ENCODE measurements at regions of chr6 and their contacts with region 1.

Region 1: GRCh38 chr6:46062306-46062706 is 46.6 kb upstream of the CLIC5 start:
- DNase-seq: no peak
- ATAC-seq: no peak
- H3K4me3 ChIP-seq: no peak overlapping the region
- H3K27ac ChIP-seq: no peak overlapping the region
- H3K4me1 ChIP-seq: peaks cover 5 to 10% of the 10 kb centered on the region in 2 donors
- H3K27me3 ChIP-seq: no peaks in the 10 kb centered on the region
- CTCF ChIP-seq: no peak
- POLR2A ChIP-seq: no peak

Region 2: GRCh38 chr6:45900808-45901752 is 161.2 kb before region 1 on chr6:
- in situ Hi-C with region 1: no loop called
- intact Hi-C with region 1: no loop called
- DNase-seq: peak in 1 of 2 donors; percentile 25
- ATAC-seq: peak; percentile 60 to 77
- H3K4me3 ChIP-seq: no peak overlapping the region
- H3K27ac ChIP-seq: peak overlapping the region; percentile 22 to 73 (median 54)
- H3K4me1 ChIP-seq: peaks cover 39 to 40% of the 10 kb centered on the region in 2 donors
- H3K27me3 ChIP-seq: no peaks in the 10 kb centered on the region
- CTCF ChIP-seq: no peak
- POLR2A ChIP-seq: no peak

Region 3: DNA sequence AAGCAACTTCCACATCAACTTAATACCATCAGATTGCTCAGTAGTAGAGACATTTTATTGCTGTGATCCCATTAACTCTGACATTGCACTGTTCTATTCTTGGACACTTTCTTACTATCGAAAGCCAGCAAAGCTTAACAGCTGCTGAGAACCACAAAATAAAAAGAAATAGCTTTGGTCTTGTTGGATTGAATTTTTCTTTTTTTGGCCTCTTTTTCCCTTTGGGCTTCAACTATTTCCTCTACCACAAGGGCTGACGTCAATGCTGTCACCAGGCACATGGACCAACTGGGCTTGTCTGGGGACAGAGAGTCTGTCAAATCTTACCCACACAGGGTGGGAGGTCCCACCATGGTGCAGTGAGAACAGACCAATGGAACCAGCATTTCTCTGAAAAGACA is 171.8 kb after region 1 on chr6:
- in situ Hi-C with region 1: no loop called
- intact Hi-C with region 1: no loop called
- DNase-seq: peak in 1 of 2 donors; percentile 41
- ATAC-seq: peak; percentile 51 to 53
- H3K4me3 ChIP-seq: no peak overlapping the region
- H3K27ac ChIP-seq: peak overlapping the region; percentile 35 to 69 (median 58)
- H3K4me1 ChIP-seq: peaks cover 23 to 53% of the 10 kb centered on the region in 2 donors
- H3K27me3 ChIP-seq: no peaks in the 10 kb centered on the region
- CTCF ChIP-seq: no peak
- POLR2A ChIP-seq: no peak

Region 4: GRCh38 chr6:46606338-46606737 is 544.0 kb after region 1 on chr6:
- in situ Hi-C with region 1: loop called in 1 of 4 experiments (anchors 25 kb)
- intact Hi-C with region 1: no loop called
- DNase-seq: no peak
- ATAC-seq: no peak
- H3K4me3 ChIP-seq: no peak overlapping the region
- H3K27ac ChIP-seq: no peak overlapping the region
- H3K4me1 ChIP-seq: peaks cover 3 to 11% of the 10 kb centered on the region in 2 donors
- H3K27me3 ChIP-seq: no peaks in the 10 kb centered on the region
- CTCF ChIP-seq: no peak
- POLR2A ChIP-seq: no peak

Region 5: GRCh38 chr6:46626228-46626909 is 564.1 kb after region 1 on chr6:
- in situ Hi-C with region 1: loop called in 2 of 4 experiments (anchors 25 kb)
- intact Hi-C with region 1: no loop called
- DNase-seq: no peak
- ATAC-seq: peak; percentile 62 to 73
- H3K4me3 ChIP-seq: no peak overlapping the region
- H3K27ac ChIP-seq: no peak overlapping the region
- H3K4me1 ChIP-seq: peaks cover 6% of the 10 kb centered on the region in 2 donors
- H3K27me3 ChIP-seq: no peaks in the 10 kb centered on the region
- CTCF ChIP-seq: peak; percentile 53 to 75 (median 63)
- POLR2A ChIP-seq: no peak

Measured in gastrocnemius medialis (tissue), 4 donors.